H1 (cell line): ENCODE measurements at regions of chr22 and their contacts with region 1.

Region 1: GRCh38 chr22:22030493-22031182 is 48.1 kb upstream of the TOP3B start:
- DNase-seq: no peak
- H3K4me3 ChIP-seq: no peak overlapping the region
- H3K27ac ChIP-seq: no peak overlapping the region
- H3K4me1 ChIP-seq: peaks cover 0 to 7% (median 2%) of the 10 kb centered on the region in 4 experiments; a peak in 4 of 7 replicates
- H3K27me3 ChIP-seq: peaks cover 35 to 83% (median 66%) of the 10 kb centered on the region in 4 experiments
- CTCF ChIP-seq: peak; percentile 48 to 70 (median 63)
- EP300 ChIP-seq: no peak
- POLR2A ChIP-seq: no peak
- RAD21 ChIP-seq: peak; percentile 65 to 76

Region 2: GRCh38 chr22:21991304-21991596 is 39.4 kb before region 1 on chr22:
- CTCF ChIA-PET with region 1: no interaction called
- POLR2A ChIA-PET with region 1: no interaction called
- DNase-seq: no peak
- H3K4me3 ChIP-seq: no peak overlapping the region
- H3K27ac ChIP-seq: no peak overlapping the region
- H3K4me1 ChIP-seq: no peaks in the 10 kb centered on the region
- H3K27me3 ChIP-seq: peaks cover 62 to 97% (median 93%) of the 10 kb centered on the region in 4 experiments
- CTCF ChIP-seq: no peak
- EP300 ChIP-seq: no peak
- POLR2A ChIP-seq: no peak
- RAD21 ChIP-seq: no peak

Region 3: GRCh38 chr22:22005945-22006595 is 24.6 kb before region 1 on chr22:
- CTCF ChIA-PET with region 1: interaction called, 11 read pairs
- POLR2A ChIA-PET with region 1: no interaction called
- DNase-seq: no peak
- H3K4me3 ChIP-seq: no peak overlapping the region
- H3K27ac ChIP-seq: no peak overlapping the region
- H3K4me1 ChIP-seq: peaks cover 0 to 5% (median 0%) of the 10 kb centered on the region in 4 experiments; a peak in 1 of 7 replicates
- H3K27me3 ChIP-seq: peaks cover 36 to 85% (median 77%) of the 10 kb centered on the region in 4 experiments
- CTCF ChIP-seq: no peak
- EP300 ChIP-seq: no peak
- POLR2A ChIP-seq: no peak
- RAD21 ChIP-seq: no peak

Region 4: DNA sequence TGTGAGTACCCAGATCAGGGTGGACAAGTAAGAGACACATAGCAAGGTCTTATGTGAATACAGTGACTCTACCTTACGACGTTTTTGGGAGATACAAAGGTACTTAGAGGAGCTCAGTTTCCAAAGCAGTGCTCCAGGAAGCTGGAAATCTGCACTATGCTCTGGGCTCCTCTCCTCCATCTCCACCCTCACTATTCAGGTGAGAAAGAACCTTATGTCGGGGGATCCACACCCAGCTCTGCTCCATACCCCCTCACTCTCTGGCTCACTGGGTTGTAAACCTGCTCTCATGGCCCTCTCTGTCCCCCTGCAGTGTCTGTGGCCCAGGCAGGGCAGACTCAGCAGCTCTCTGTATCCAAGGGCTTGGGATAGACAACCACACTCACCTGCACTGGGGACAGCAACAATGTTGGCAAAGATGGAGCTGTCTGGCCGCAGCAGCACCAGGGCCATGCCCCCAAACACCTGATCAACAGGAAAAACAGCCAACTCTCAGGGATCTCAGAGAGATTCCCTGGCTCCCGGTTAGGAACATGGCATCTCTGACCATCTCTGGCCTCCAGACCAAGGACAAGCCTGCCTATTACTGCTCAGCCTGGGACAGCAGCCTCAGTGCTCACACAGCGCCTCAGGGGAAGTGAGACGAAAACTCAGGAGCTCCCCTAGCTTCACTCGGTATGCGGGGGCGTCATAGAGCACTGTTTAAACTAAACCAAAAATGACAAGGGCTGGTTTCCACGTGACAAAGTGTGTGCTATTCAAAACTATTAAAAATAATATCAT is 12.8 kb after region 1 on chr22:
- CTCF ChIA-PET with region 1: interaction called, 34 read pairs
- POLR2A ChIA-PET with region 1: no interaction called
- DNase-seq: no peak
- H3K4me3 ChIP-seq: no peak overlapping the region
- H3K27ac ChIP-seq: no peak overlapping the region
- H3K4me1 ChIP-seq: no peaks in the 10 kb centered on the region
- H3K27me3 ChIP-seq: peaks cover 64 to 94% (median 85%) of the 10 kb centered on the region in 4 experiments
- CTCF ChIP-seq: no peak
- EP300 ChIP-seq: no peak
- POLR2A ChIP-seq: no peak
- RAD21 ChIP-seq: no peak

Region 5: DNA sequence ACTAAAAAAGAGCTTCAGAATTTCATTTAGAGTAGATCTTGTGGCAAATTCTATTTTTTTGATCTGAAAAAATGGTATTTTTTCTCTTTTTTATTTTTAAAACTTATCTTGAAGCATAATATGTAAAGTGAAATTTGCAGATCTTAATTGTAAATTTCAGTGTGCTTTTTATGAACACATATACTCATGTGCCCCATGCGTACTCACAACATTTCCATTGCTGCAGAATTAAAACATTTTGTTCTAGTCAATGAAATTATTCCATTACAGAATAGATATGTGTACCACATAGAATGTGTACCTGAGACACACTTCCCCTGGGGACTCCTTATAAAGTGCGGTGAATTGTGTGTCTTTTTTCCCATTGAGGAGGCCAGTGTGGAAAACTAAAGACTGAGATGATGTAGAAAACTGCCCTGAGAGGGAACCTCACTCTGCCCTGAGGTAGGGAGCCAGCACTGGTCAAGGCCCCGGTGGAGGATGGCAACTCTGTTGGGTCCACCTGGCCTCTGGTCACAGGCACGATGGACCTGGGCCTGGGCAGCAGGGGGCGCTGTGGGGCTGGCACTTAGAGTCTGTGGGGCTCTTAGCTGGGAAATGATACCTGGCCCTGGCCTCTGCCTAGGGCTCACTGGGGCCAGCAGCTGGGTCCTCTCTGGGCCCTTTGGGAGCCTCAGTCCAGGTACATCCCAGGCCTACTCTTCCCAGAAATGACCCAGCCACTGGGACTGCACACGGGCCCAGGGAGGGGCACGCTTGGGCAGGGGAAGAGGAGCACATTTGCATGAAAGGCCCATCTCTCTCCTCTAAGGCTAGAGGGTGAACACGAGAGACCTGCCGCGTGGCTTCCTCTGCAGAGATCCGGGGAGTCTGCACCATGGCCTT is 29.8 kb after region 1 on chr22:
- CTCF ChIA-PET with region 1: interaction called, 17 read pairs
- POLR2A ChIA-PET with region 1: no interaction called
- DNase-seq: peak; percentile 23 to 97
- H3K4me3 ChIP-seq: no peak overlapping the region
- H3K27ac ChIP-seq: no peak overlapping the region
- H3K4me1 ChIP-seq: peaks cover 0 to 3% (median 0%) of the 10 kb centered on the region in 4 experiments; a peak in 3 of 7 replicates
- H3K27me3 ChIP-seq: peaks cover 49 to 84% (median 76%) of the 10 kb centered on the region in 4 experiments
- CTCF ChIP-seq: peak; percentile 94 to 95 (median 95)
- EP300 ChIP-seq: no peak
- POLR2A ChIP-seq: no peak
- RAD21 ChIP-seq: peak; percentile 76 to 82